GM18951 (cell line): ENCODE measurements at regions of chr5 and their contacts with region 1.

Region 1: GRCh38 chr5:151051066-151051930 is 29.5 kb downstream of the TNIP1 start:
- POLR2A ChIP-seq: no peak

Region 2: GRCh38 chr5:150672237-150672883 is 378.9 kb before region 1 on chr5:
- in situ Hi-C with region 1: no loop called
- POLR2A ChIP-seq: no peak

Region 3: DNA sequence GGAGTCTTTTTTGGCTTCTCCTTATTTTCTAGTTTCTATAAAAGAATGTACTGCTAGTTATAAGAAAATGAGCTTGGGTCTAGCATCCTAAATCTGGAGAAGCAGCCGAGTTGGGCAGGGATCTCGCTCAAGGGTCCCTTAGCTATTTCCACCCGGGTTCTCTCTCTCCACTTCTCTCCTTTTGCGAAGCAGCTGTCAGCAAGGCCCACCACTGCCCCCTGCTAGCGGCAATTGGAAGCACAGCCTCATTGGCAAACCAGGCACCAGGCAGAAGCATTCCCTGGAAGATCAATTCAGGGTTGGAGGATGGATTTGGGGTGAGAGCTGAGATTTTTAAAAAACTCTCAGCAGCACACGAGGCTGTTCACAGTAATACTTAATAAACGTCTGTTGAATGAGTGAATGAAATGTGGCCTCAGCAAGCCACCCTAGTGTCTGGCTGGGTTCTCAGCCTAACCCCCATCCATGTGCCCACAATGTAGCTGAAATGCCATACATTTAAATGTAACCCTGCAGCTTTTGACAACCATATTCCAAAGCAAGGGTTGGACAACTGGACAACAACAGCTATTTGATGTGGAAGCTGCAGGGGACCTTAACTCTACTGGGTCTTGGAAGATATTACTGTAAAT is 64.1 kb after region 1 on chr5:
- in situ Hi-C with region 1: loop called (anchors 5 kb)
- POLR2A ChIP-seq: no peak